Activated naive CD4-positive, alpha-beta T cell treated with anti-CD3 and anti-CD28 coated beads, Interleukin-2, amount 10 ng/mL, durations not matched to agents 7 days and 5 days (primary cell): ENCODE measurements at regions of chr12 and their contacts with region 1.

Region 1: GRCh38 chr12:5022465-5023061 is 21.1 kb upstream of the KCNA5 start:
- DNase-seq: peak; percentile 50
- H3K4me3 Mint-ChIP-seq: no peak overlapping the region
- H3K27ac Mint-ChIP-seq: no peak overlapping the region
- H3K4me1 Mint-ChIP-seq: no peaks in the 10 kb centered on the region
- H3K27me3 Mint-ChIP-seq: peaks cover 16% of the 10 kb centered on the region

Region 2: DNA sequence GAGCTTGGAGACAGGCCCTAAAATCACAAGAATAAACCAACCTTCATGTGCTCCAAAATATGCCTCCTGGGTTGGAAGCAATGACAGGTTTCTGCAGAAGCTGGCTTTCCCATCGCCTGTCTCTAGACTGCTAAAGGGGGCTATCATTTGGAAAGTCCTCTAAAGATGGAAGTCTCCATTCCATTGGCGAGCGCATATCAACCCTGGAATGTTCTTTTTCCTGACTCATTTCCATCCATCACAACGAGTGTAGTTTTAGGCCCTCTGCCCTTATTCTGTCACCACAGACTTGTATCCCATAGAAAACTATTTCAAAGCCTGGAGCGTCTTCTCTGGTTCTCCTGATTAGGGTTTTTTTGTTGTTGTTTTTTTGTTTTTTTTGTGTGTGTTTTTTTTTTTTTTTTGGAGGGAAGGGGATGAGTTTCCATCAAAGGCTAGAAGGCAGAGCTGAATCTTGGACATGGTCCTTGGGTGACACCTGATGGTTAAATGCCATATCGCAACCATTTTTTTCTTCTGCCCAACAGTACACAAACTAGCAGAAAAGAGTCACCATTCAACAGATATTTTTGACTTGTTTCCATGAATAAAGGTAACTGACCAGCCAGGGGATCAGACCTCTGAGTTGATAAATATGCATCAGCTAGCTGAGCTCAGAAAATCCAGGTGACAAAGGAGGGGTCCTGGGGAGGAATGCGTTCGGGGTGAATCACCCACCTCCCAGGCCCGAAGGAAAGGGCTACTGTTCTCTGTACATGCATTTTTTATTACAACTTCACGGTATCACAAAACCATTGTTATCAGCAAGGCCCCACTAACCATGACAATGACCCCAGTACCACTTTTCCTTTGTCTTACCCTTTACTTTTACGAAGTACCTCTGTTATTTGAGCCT is 61.6 kb after region 1 on chr12:
- CTCF ChIA-PET with region 1: interaction called, 51 read pairs
- DNase-seq: peak; percentile 38
- H3K4me3 Mint-ChIP-seq: no peak overlapping the region
- H3K27ac Mint-ChIP-seq: no peak overlapping the region
- H3K4me1 Mint-ChIP-seq: no peaks in the 10 kb centered on the region
- H3K27me3 Mint-ChIP-seq: peaks cover 4% of the 10 kb centered on the region